Esophagus squamous epithelium (tissue), 5 donors: ENCODE measurements at regions of chr12 and their contacts with region 1.

Region 1: DNA sequence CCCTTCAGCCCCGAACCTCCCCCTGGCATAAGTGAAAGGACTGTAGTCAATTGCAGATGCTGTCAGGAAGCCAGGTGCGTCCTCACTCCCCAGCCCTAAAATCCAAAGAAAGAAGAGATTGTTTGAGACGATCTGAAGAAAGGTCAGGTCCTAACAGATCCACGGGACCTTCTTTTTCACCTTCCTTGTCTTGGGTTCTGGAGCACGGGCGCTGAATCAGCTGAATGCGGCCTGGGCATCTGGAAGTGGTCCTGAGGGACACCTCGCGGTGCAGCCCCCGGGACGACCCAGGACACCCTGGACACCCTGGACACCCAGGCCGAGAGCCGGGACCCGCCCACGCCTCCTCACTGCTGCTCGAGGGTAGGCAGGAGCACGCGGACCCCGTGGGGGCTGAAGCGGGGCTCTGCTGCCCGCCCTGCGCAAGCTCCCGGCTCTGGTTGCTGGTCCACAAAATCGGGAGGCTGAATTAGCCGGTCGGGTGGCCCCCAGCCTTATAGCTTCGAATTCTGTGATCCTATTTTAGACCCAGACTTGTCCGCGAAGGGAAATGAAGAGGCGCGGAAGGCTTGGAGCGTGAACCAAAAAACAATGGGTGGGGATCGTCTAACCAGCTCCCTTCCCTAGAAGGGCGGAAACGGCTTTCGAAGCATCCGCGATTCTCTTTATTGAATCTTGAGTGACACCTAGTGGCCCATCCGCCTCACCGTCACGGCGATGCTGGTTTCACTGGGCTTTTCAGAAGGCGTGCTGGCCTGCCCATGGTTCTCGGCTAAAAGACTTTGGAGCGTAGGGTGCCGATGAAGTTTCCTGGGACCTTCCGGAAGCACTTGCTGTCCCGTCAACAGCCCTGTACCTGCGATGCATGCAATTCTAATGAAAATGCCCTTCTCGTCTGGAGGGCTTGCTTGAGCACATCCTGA is 46.4 kb upstream of the PLXNC1 start:
- DNase-seq: peak; percentile 49
- H3K4me3 ChIP-seq: peak overlapping the region; percentile 32 to 83 (median 56)
- H3K27ac ChIP-seq: peak overlapping the region; percentile 4 to 63 (median 46)
- H3K4me1 ChIP-seq: peaks cover 13 to 26% (median 15%) of the 10 kb centered on the region in 3 donors
- H3K27me3 ChIP-seq: peaks cover 0 to 31% (median 0%) of the 10 kb centered on the region in 4 donors
- CTCF ChIP-seq: peak; percentile 72 to 86 (median 79)
- POLR2A ChIP-seq: no peak

Region 2: GRCh38 chr12:93502802-93503623 is 599.0 kb before region 1 on chr12:
- intact Hi-C with region 1: loop called (anchors 5 kb)
- DNase-seq: no peak
- H3K4me3 ChIP-seq: no peak overlapping the region
- H3K27ac ChIP-seq: no peak overlapping the region
- H3K4me1 ChIP-seq: no peaks in the 10 kb centered on the region
- H3K27me3 ChIP-seq: no peaks in the 10 kb centered on the region
- CTCF ChIP-seq: peak; percentile 60 to 79 (median 73)
- POLR2A ChIP-seq: no peak

Region 3: GRCh38 chr12:93763746-93764147 is 338.3 kb before region 1 on chr12:
- intact Hi-C with region 1: loop called (anchors 5 kb)
- DNase-seq: no peak
- H3K4me3 ChIP-seq: no peak overlapping the region
- H3K27ac ChIP-seq: no peak overlapping the region
- H3K4me1 ChIP-seq: peaks cover 4 to 43% (median 19%) of the 10 kb centered on the region in 3 donors
- H3K27me3 ChIP-seq: no peaks in the 10 kb centered on the region
- CTCF ChIP-seq: peak in 4 of 6 experiments; percentile 11 to 46 (median 18)
- POLR2A ChIP-seq: no peak

Region 4: DNA sequence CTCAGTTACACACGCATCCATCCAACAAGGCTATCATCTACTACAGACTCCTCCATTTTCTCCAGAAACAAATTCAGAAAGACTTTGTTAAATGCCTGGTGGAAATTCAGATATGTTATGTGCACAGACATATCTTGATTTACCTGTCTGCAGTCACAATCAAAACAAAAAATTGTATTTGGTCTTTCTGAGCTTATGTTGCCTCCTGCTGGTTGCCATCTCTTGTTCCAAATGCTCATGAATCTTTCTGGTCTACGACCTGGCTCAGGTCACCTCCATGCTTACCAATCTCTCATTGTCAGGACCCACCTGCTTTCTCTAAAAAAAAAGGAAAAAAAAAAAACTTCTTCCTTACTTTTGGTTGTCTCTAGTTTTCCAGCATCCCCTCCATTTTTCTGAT is 122.8 kb before region 1 on chr12:
- intact Hi-C with region 1: loop called (anchors 10 kb)
- DNase-seq: no peak
- H3K4me3 ChIP-seq: no peak overlapping the region
- H3K27ac ChIP-seq: no peak overlapping the region
- H3K4me1 ChIP-seq: peaks cover 0 to 29% (median 5%) of the 10 kb centered on the region in 3 donors
- H3K27me3 ChIP-seq: no peaks in the 10 kb centered on the region
- CTCF ChIP-seq: peak in 5 of 6 experiments; percentile 32 to 60 (median 39)
- POLR2A ChIP-seq: no peak